Activated CD4-positive, alpha-beta T cell treated with anti-CD3 and anti-CD28 coated beads, Interleukin-2, amount 10 ng/mL, durations not matched to agents 24 days and 14 days (primary cell): ENCODE measurements at regions of chrX and their contacts with region 1.

Region 1: DNA sequence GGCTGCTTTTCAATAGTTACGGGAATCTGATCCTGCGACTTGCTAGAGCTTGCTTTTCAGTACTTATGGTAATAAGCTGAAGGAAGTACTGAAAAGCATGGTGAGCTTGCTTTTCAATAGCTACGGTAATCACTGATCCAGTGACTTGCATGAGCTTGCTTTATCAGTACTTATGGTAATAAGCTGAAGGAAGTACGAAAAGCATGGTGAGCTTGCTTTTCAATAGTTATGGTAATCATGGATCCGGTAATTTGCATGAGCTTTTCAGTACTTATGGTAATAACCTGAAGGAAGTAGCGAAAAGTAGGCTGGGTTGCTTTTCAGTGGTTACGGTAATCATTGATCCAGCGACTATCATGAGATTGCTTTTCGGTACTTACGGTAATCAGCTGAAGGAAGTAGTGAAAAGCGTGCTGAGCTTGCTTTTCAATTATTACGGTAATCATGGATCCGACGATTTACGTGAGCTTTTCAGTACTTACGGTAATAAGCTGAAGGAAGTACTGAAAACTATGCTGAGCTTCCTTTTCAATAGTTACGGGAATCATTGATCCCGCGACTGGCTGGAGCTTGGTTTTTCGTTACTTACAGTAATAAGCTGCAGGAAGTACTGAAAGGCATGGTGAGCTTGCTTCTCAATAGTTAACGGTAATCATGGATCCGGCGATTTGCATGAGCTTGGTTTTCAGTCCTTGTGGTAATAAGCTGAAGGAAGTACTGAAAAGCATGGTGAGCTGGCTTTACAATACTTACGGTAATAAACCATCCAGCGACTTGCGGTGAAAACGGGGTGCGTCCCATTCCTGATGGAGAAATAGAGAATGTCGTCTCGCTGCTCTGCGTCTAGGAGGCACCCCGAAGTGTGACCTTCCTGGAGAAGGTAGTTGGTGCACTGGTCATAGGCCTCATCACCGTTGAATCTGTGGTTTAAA is 6.5 kb downstream of the CRLF2 start:
- DNase-seq: peak; percentile 82
- H3K4me3 Mint-ChIP-seq: peak overlapping the region; percentile 77
- H3K27ac Mint-ChIP-seq: peak overlapping the region; percentile 35
- H3K4me1 Mint-ChIP-seq: peaks cover 33% of the 10 kb centered on the region
- H3K27me3 Mint-ChIP-seq: peaks cover 2% of the 10 kb centered on the region

Region 2: GRCh38 chrX:1105671-1106419 is 100.1 kb before region 1 on chrX:
- intact Hi-C with region 1: no loop called
- DNase-seq: no peak
- H3K4me3 Mint-ChIP-seq: no peak overlapping the region
- H3K27ac Mint-ChIP-seq: no peak overlapping the region
- H3K4me1 Mint-ChIP-seq: no peaks in the 10 kb centered on the region
- H3K27me3 Mint-ChIP-seq: peaks cover 16% of the 10 kb centered on the region

Region 3: GRCh38 chrX:1138476-1139184 is 67.3 kb before region 1 on chrX:
- intact Hi-C with region 1: no loop called
- DNase-seq: peak; percentile 39
- H3K4me3 Mint-ChIP-seq: no peak overlapping the region
- H3K27ac Mint-ChIP-seq: no peak overlapping the region
- H3K4me1 Mint-ChIP-seq: no peaks in the 10 kb centered on the region
- H3K27me3 Mint-ChIP-seq: no peaks in the 10 kb centered on the region

Region 4: GRCh38 chrX:1224954-1225353 is 19.0 kb after region 1 on chrX:
- intact Hi-C with region 1: loop called (anchors 1 kb)
- DNase-seq: peak; percentile 78
- H3K4me3 Mint-ChIP-seq: no peak overlapping the region
- H3K27ac Mint-ChIP-seq: no peak overlapping the region
- H3K4me1 Mint-ChIP-seq: peaks cover 5% of the 10 kb centered on the region
- H3K27me3 Mint-ChIP-seq: peaks cover 3% of the 10 kb centered on the region

Region 5: GRCh38 chrX:1679238-1679637 is 473.3 kb after region 1 on chrX:
- intact Hi-C with region 1: loop called (anchors 5 kb)
- DNase-seq: peak; percentile 65
- H3K4me3 Mint-ChIP-seq: no peak overlapping the region
- H3K27ac Mint-ChIP-seq: peak overlapping the region; percentile 10
- H3K4me1 Mint-ChIP-seq: peaks cover 19% of the 10 kb centered on the region
- H3K27me3 Mint-ChIP-seq: no peaks in the 10 kb centered on the region